ENCODE measurements at regions of chr16 and their contacts with region 1.

Region 1: DNA sequence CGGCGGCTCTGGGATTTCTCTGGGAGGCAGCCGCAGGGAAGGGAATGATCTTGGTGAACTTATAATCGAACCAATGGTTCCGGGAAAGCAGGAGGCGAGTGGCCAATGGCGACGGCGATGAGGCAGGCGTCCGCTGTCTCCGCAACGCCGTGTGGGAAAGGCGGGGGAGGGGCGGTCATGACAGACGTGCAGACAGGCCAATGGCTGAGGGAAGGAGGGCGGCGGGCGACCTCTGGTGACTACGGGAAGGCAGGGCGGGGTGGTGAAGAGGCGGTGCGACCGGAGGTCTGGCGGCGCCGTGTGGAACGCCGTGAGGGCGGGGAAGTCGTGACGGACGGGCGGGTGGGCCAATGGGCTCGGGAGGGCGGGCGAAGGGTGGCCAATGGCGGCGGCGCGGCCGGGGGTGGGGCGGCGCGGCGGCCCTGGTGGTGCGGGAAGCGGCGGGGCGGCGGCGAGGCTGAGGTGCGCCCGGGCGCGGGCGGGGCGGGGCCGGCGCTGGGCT is at the start of gene RAB40C:
- DNase-seq: peak; percentile 98 to 100 (median 99)
- ATAC-seq: peak; percentile 83 to 84
- H3K4me3 Mint-ChIP-seq: peak within 1 kb of the TSS; percentile 95 to 100 (median 99)
- H3K27ac Mint-ChIP-seq: peak within 1 kb of the TSS; percentile 98 to 100 (median 98)
- H3K4me1 Mint-ChIP-seq: peaks cover 24 to 46% (median 45%) of the 10 kb centered on the region in 4 donors
- H3K27me3 Mint-ChIP-seq: no peaks in the 10 kb centered on the region
- polyA plus RNA-seq, gene RAB40C: 5.8 to 14.6 (median 6.2) TPM

Region 2: GRCh38 chr16:482468-483185 is 107.1 kb before region 1 on chr16:
- POLR2A ChIA-PET with region 1: no interaction called
- DNase-seq: no peak
- ATAC-seq: no peak
- H3K4me3 Mint-ChIP-seq: no peak overlapping the region
- H3K27ac Mint-ChIP-seq: no peak overlapping the region
- H3K4me1 Mint-ChIP-seq: peaks cover 0 to 1% (median 0%) of the 10 kb centered on the region in 4 donors
- H3K27me3 Mint-ChIP-seq: no peaks in the 10 kb centered on the region

Region 3: GRCh38 chr16:578870-579405 is 10.8 kb before region 1 on chr16:
- POLR2A ChIA-PET with region 1: interaction called, 10 read pairs
- DNase-seq: peak; percentile 44 to 79 (median 60)
- ATAC-seq: peak; percentile 95 to 96
- H3K4me3 Mint-ChIP-seq: no peak overlapping the region
- H3K27ac Mint-ChIP-seq: no peak overlapping the region
- H3K4me1 Mint-ChIP-seq: peaks cover 0 to 5% (median 2%) of the 10 kb centered on the region in 4 donors
- H3K27me3 Mint-ChIP-seq: no peaks in the 10 kb centered on the region

Region 4: DNA sequence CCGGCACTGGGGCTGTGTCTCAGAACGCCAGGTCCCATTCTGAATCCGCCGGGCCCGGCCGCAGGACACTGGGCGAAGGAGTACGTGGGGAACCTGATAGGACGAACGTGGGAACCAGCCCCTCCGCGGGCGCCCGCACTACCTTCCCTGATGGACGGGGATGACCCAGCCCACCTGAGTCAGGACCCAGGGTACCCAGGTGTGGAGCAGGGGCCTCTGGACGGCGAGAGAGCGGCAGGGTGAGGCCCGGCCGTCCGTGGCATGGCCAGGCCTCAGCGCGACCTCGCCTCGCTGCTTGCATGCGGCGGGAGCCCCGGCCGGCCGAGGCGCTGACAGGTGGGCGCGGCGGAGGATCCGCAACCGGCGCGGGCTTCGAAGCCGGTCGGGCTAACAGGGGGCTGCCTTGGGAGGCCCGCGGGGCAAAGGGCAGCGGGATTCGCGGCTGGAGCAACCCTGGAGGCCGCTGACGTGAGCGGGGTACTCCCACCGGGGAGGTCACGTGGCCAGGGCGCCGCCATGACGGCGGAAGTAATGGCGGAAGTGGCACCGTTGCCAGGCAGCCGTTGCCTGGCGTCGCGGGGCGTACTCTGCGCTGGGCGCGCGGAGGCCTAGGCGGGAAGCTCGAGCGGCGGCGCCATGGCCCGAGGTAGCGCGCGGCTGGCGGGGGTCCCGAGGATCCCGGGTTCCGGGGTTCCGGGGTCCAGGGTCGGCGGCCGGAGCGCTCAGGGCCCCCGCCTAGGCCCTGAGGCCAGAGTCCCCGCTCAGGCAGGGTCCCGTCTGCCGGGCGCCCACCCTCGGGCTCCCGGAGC is 59.3 kb after region 1 on chr16 and contains the start of gene WDR90:
- POLR2A ChIA-PET with region 1: interaction called, 12 read pairs
- DNase-seq: peak; percentile 88 to 95 (median 90)
- ATAC-seq: peak; percentile 91 to 98
- H3K4me3 Mint-ChIP-seq: peak within 1 kb of the TSS; percentile 68 to 85 (median 75)
- H3K27ac Mint-ChIP-seq: peak within 1 kb of the TSS in 8 of 10 donors; percentile 10 to 93 (median 84)
- H3K4me1 Mint-ChIP-seq: peaks cover 8 to 29% (median 15%) of the 10 kb centered on the region in 4 donors
- H3K27me3 Mint-ChIP-seq: no peaks in the 10 kb centered on the region
- polyA plus RNA-seq, gene WDR90: 0.27 to 2.5 (median 1.5) TPM